Dorsolateral prefrontal cortex (tissue), 120 donors: ENCODE measurements at regions of chr1 and their contacts with region 1.

Region 1: GRCh38 chr1:145978854-145979759 is 14.6 kb downstream of the POLR3GL start:
- DNase-seq: peak; percentile 70 to 99 (median 92)
- H3K4me3 ChIP-seq: peak overlapping the region in 55 of 59 donors; percentile 3 to 56 (median 34)
- H3K27ac ChIP-seq: peak overlapping the region; percentile 66 to 98 (median 95)
- H3K27me3 ChIP-seq: no peaks in the 10 kb centered on the region
- CTCF ChIP-seq: peak in 28 of 56 donors; percentile 2 to 41 (median 18)

Region 2: GRCh38 chr1:145823565-145824498 is 155.3 kb before region 1 on chr1 and contains the starts of genes POLR3C and RNF115:
- intact Hi-C with region 1: loop called in 1 of 2 experiments (anchors 5 kb)
- DNase-seq: peak; percentile 82 to 94 (median 90)
- H3K4me3 ChIP-seq: peak within 1 kb of the TSS; percentile 55 to 98 (median 86)
- H3K27ac ChIP-seq: peak within 1 kb of the TSS; percentile 44 to 97 (median 93)
- H3K27me3 ChIP-seq: no peaks in the 10 kb centered on the region
- CTCF ChIP-seq: peak in 34 of 56 donors; percentile 3 to 51 (median 22)
- total RNA-seq, gene POLR3C: 17.3 to 35.6 (median 26.6) TPM
- total RNA-seq, gene RNF115: 20.5 to 38.6 (median 29.2) TPM

Region 3: GRCh38 chr1:145963995-145964901 is 14.9 kb before region 1 on chr1 and contains the starts of genes ANKRD34A and POLR3GL:
- intact Hi-C with region 1: loop called in 1 of 2 experiments (anchors 1 kb)
- DNase-seq: peak; percentile 83 to 98 (median 96)
- H3K4me3 ChIP-seq: peak within 1 kb of the TSS; percentile 45 to 100 (median 77)
- H3K27ac ChIP-seq: peak within 1 kb of the TSS; percentile 76 to 99 (median 95)
- H3K27me3 ChIP-seq: no peaks in the 10 kb centered on the region
- CTCF ChIP-seq: peak in 33 of 56 donors; percentile 6 to 59 (median 35)
- total RNA-seq, gene ANKRD34A: 13.4 to 48.3 (median 29.4) TPM
- total RNA-seq, gene POLR3GL: 13.1 to 24.6 (median 19.0) TPM

Region 4: DNA sequence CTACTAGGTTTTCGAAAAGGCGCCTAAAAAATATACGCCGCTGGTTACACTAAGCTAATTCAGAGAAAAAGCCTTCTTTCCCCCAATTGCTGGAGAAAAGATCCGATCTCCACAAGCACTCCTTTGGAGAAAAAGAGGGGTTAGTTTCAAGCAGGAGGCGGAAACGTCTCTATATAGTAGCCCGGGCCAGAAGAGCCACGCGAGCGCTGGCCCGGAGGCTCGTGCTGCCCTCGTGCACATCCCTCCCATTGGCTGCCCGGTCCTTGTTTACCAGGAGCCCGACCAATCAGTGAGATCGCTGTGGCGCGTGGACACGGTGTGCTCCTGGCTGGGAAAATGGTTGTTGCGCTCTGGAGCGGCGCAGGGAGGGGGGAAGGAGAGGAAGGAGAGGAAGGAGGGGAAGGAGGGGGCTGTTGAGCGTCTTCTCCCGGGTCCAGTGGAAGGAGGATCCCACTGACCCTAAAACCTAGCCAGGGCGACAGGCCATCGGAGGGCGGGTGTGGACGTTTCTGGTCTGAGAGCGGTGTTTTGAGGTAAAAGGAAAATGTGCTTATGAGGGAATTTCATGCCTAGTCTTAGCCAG is 17.4 kb after region 1 on chr1 and contains the start of gene TXNIP:
- intact Hi-C with region 1: loop called (anchors 1 kb)
- DNase-seq: peak; percentile 98 to 100 (median 100)
- H3K4me3 ChIP-seq: peak within 1 kb of the TSS; percentile 62 to 98 (median 85)
- H3K27ac ChIP-seq: peak within 1 kb of the TSS; percentile 77 to 100 (median 98)
- H3K27me3 ChIP-seq: no peaks in the 10 kb centered on the region
- CTCF ChIP-seq: peak in 16 of 56 donors; percentile 3 to 35 (median 14)
- total RNA-seq, gene TXNIP: 36.4 to 580 (median 158) TPM

Region 5: DNA sequence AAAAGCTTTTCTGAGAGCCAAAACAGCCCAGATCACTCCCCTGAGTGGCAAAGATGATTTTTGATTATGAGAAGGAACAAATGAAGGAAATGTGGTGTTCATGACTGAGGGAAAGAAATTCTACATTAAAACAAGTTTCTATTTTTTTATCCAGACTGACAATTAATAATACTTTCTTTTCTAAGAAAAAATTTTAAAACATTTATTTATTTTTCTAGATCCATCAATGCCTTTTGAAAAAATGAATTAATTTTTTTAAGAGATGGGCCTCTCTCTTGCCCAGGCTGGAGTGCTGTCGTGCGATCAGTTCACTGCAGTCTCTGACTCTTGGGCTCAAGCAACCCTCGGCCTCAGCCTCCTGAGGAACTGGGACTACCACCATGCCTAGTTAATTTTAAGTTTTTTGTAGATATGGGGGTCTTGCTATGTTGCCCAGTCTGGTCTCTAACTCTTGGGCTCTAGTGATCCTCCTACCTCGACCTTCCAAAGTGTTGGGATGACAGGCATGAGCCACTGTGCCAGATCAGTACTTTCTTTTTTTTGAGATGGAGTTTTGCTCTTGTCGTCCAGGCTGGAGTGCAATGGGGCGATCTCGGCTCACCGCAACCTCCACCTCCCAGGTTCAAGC is 28.5 kb after region 1 on chr1:
- intact Hi-C with region 1: loop called (anchors 1 to 5 kb)
- DNase-seq: no peak
- H3K4me3 ChIP-seq: peak overlapping the region in 17 of 59 donors; percentile 2 to 47 (median 29)
- H3K27ac ChIP-seq: peak overlapping the region in 57 of 59 donors; percentile 5 to 90 (median 77)
- H3K27me3 ChIP-seq: no peaks in the 10 kb centered on the region
- CTCF ChIP-seq: peak in 16 of 56 donors; percentile 4 to 42 (median 10)

Region 6: GRCh38 chr1:146012737-146013403 is 33.8 kb after region 1 on chr1:
- intact Hi-C with region 1: loop called in 1 of 2 experiments (anchors 5 kb)
- DNase-seq: peak in 1 of 10 donors; percentile 40
- H3K4me3 ChIP-seq: peak overlapping the region in 3 of 59 donors; percentile 15 to 26 (median 20)
- H3K27ac ChIP-seq: no peak overlapping the region
- H3K27me3 ChIP-seq: no peaks in the 10 kb centered on the region
- CTCF ChIP-seq: peak; percentile 38 to 97 (median 78)